Kidney (tissue), 22 donors: ENCODE measurements at regions of chr17 and their contacts with region 1.

Region 1: DNA sequence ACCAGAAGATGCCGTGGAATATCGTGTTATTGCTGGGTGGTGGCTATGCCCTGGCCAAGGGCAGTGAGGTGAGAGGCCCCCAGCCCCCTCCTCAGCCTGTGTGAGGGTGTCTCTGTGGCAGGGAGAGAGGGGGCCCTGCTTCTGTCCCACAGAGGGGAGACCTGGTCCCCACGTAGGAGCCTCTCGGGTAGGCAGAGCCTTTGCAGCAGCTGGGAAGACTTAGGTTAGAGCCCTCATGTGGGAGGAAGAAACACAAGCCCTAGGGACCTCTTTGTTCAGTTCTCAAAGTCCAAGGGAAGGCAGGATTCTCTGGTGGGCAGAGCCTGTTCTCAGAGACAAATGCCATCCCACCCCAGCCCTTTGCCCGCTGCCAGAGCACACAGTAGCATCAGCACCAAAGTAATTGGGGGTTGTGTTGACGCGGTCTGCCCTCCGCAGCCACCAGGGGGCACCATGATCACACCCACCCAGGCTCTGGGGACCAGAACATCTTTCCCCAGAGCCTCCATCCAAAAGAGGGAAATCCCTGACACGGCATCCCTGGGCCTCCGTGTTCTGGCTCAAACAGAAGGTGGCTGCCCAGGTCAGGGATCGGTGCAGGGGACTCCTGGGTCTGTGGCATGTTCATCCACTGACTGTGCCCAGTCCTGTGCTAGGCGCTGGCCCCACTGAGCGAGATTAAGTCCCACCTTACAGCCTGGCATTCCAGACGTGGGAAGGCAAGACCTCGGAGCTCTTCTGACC is 11.5 kb upstream of the FOXN1 start:
- DNase-seq: peak; percentile 75 to 90 (median 84)
- H3K4me3 ChIP-seq: no peak overlapping the region
- H3K27ac ChIP-seq: no peak overlapping the region
- H3K4me1 ChIP-seq: peaks cover 0 to 17% (median 7%) of the 10 kb centered on the region in 3 donors
- H3K27me3 ChIP-seq: no peaks in the 10 kb centered on the region
- CTCF ChIP-seq: peak; percentile 88

Region 2: DNA sequence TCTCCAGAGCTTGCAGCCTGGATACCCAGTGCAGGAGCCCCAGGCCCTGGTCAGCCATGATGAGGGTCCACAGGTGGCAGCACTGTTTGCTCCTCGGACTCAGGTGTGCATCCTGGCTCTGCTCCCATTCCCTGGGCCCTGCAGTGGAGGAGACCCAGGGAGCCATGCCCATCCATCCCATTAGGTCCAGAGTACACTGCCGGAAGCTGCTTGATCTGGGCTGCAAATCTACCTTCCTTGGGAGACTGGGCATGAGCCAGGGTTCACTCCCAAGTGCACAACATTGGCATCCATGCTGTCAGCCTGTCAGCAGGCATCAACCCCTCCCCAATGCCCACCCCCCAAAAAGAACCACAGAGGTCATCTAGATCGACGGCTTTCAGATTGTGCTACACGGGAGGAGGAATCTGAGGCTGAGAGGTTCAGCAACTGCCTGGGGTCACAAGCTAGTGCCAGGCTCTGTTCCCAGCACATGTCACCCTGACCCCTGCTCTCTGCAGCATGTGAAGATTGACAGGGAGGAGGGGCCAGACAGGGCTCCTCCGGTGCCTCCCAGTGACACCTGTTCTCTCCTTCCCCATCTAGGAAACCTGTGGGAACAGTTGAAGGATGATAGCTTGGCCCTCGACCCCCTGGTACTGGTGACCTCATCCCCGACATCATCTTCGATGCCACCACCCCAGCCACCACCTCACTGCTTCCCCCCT is 42.1 kb after region 1 on chr17:
- intact Hi-C with region 1: loop called (anchors 5 kb)
- DNase-seq: no peak
- H3K4me3 ChIP-seq: no peak overlapping the region
- H3K27ac ChIP-seq: no peak overlapping the region
- H3K4me1 ChIP-seq: no peaks in the 10 kb centered on the region
- H3K27me3 ChIP-seq: no peaks in the 10 kb centered on the region
- CTCF ChIP-seq: no peak

Region 3: GRCh38 chr17:28612936-28613872 is 118.6 kb after region 1 on chr17:
- intact Hi-C with region 1: loop called (anchors 10 kb)
- DNase-seq: peak in 3 of 5 donors; percentile 33 to 76 (median 52)
- H3K4me3 ChIP-seq: peak overlapping the region in 1 of 3 donors; percentile 18
- H3K27ac ChIP-seq: no peak overlapping the region
- H3K4me1 ChIP-seq: no peaks in the 10 kb centered on the region
- H3K27me3 ChIP-seq: no peaks in the 10 kb centered on the region
- CTCF ChIP-seq: peak; percentile 66